Activated CD4-positive, alpha-beta T cell treated with anti-CD3 and anti-CD28 coated beads for 36 hours (primary cell): ENCODE measurements at regions of chr3 and their contacts with region 1.

Region 1: GRCh38 chr3:120348981-120349818 is at the start of gene LRRC58:
- DNase-seq: peak; percentile 93
- ATAC-seq: peak; percentile 88
- H3K4me3 Mint-ChIP-seq: peak within 1 kb of the TSS; percentile 91
- H3K27ac Mint-ChIP-seq: peak within 1 kb of the TSS; percentile 94
- H3K4me1 Mint-ChIP-seq: peaks cover 43% of the 10 kb centered on the region
- H3K27me3 Mint-ChIP-seq: peaks cover 2% of the 10 kb centered on the region
- total RNA-seq, gene LRRC58: 20.7 to 22.2 TPM

Region 2: DNA sequence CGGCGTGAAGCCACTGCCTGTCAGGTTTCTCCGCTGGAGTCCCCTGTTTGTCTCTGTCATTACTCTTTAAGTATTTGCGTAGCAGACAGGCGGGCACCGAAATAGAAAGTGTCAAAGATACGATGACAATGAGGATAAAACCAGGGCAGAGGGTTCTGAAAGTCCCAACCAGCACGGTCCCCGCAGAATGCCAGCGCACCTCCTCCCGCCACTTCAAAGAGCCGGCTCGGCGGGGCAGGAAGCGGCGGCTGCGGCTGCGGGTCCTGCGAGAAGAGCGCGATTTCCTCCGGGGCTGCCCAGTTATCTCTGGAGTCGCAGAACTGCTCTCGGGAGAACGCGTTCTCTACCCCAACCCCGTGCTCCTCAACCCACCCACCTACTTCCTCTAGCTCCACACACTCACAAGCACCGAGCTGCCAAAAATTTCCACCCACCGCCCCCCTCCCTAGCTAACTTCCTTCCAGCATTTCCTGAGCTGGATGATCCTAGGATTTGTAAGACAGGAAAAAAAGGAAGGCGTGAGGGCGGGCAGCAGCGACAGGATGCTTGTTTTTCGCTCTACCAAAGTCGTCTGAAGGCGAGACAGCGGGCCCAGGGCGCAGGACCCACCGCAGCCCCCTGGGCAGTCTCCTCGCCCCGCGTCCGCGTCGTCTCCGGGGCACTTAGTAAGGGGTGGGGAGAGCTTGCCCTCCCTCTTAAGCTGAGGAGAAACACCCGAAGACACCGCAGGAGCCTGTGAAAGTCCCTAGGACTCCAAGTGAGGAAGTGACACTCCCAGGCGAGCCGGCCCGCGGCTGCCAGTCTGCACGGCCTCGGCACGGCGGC is 1055.1 kb before region 1 on chr3 and contains the start of gene ARHGAP31:
- CTCF ChIA-PET with region 1: no interaction called
- POLR2A ChIA-PET with region 1: no interaction called
- intact Hi-C with region 1: loop called in 1 of 2 experiments (anchors 10 kb)
- DNase-seq: peak; percentile 93
- ATAC-seq: peak; percentile 78
- H3K4me3 Mint-ChIP-seq: peak within 1 kb of the TSS; percentile 82
- H3K27ac Mint-ChIP-seq: peak within 1 kb of the TSS; percentile 93
- H3K4me1 Mint-ChIP-seq: peaks cover 52% of the 10 kb centered on the region
- H3K27me3 Mint-ChIP-seq: no peaks in the 10 kb centered on the region
- total RNA-seq, gene ARHGAP31: 9.2 to 9.6 TPM

Region 3: GRCh38 chr3:119637679-119638525 is 711.3 kb before region 1 on chr3:
- CTCF ChIA-PET with region 1: no interaction called
- POLR2A ChIA-PET with region 1: no interaction called
- intact Hi-C with region 1: loop called in 1 of 2 experiments (anchors 2 kb)
- DNase-seq: peak; percentile 14
- ATAC-seq: peak; percentile 34
- H3K4me3 Mint-ChIP-seq: no peak overlapping the region
- H3K27ac Mint-ChIP-seq: peak overlapping the region; percentile 92
- H3K4me1 Mint-ChIP-seq: peaks cover 38% of the 10 kb centered on the region
- H3K27me3 Mint-ChIP-seq: no peaks in the 10 kb centered on the region

Region 4: DNA sequence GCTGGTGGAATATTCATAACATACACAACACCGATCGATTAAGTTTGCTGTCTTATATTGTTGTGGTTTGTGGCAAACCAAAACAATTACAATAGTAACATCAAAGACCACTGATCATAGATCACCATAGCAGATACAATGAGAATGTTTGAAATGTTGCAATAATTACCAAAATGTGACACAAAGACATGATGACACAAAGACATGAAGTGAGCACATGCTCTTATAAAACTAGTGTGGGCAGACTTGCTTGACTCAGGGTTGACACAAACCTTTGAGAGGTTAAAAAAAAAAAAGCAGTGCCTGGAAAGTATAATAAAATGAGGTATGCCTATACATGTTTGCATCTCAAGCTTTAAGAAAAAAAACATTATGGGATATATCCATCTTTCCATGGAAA is 437.0 kb before region 1 on chr3:
- CTCF ChIA-PET with region 1: no interaction called
- POLR2A ChIA-PET with region 1: interaction called, 3 read pairs
- intact Hi-C with region 1: loop called (anchors 5 to 10 kb)
- DNase-seq: no peak
- ATAC-seq: peak; percentile 79
- H3K4me3 Mint-ChIP-seq: peak overlapping the region; percentile 44
- H3K27ac Mint-ChIP-seq: peak overlapping the region; percentile 90
- H3K4me1 Mint-ChIP-seq: peaks cover 27% of the 10 kb centered on the region
- H3K27me3 Mint-ChIP-seq: no peaks in the 10 kb centered on the region

Region 5: GRCh38 chr3:120558771-120559241 is 209.6 kb after region 1 on chr3:
- CTCF ChIA-PET with region 1: interaction called, 3 read pairs
- POLR2A ChIA-PET with region 1: no interaction called
- intact Hi-C with region 1: loop called in 1 of 2 experiments (anchors 2 kb)
- DNase-seq: peak; percentile 93
- ATAC-seq: peak; percentile 68
- H3K4me3 Mint-ChIP-seq: peak overlapping the region; percentile 56
- H3K27ac Mint-ChIP-seq: peak overlapping the region; percentile 10
- H3K4me1 Mint-ChIP-seq: peaks cover 12% of the 10 kb centered on the region
- H3K27me3 Mint-ChIP-seq: peaks cover 6% of the 10 kb centered on the region

Region 6: GRCh38 chr3:120908030-120908794 is 559.0 kb after region 1 on chr3 and contains the start of gene STXBP5L:
- CTCF ChIA-PET with region 1: no interaction called
- POLR2A ChIA-PET with region 1: no interaction called
- intact Hi-C with region 1: loop called in 1 of 2 experiments (anchors 5 kb)
- DNase-seq: peak; percentile 83
- ATAC-seq: peak; percentile 97
- H3K4me3 Mint-ChIP-seq: peak within 1 kb of the TSS; percentile 69
- H3K27ac Mint-ChIP-seq: no peak within 1 kb of the TSS
- H3K4me1 Mint-ChIP-seq: peaks cover 16% of the 10 kb centered on the region
- H3K27me3 Mint-ChIP-seq: peaks cover 46% of the 10 kb centered on the region
- total RNA-seq, gene STXBP5L: not detected